Gastrocnemius medialis (tissue), 4 donors: ENCODE measurements at regions of chr9 and their contacts with region 1.

Region 1: GRCh38 chr9:7094052-7094451 is 336.3 kb downstream of the KDM4C start:
- DNase-seq: no peak
- ATAC-seq: no peak
- H3K4me3 ChIP-seq: no peak overlapping the region
- H3K27ac ChIP-seq: no peak overlapping the region
- H3K4me1 ChIP-seq: peaks cover 38 to 39% of the 10 kb centered on the region in 2 donors
- H3K27me3 ChIP-seq: no peaks in the 10 kb centered on the region
- CTCF ChIP-seq: peak in 4 of 5 experiments; percentile 39 to 59 (median 41)
- POLR2A ChIP-seq: no peak

Region 2: DNA sequence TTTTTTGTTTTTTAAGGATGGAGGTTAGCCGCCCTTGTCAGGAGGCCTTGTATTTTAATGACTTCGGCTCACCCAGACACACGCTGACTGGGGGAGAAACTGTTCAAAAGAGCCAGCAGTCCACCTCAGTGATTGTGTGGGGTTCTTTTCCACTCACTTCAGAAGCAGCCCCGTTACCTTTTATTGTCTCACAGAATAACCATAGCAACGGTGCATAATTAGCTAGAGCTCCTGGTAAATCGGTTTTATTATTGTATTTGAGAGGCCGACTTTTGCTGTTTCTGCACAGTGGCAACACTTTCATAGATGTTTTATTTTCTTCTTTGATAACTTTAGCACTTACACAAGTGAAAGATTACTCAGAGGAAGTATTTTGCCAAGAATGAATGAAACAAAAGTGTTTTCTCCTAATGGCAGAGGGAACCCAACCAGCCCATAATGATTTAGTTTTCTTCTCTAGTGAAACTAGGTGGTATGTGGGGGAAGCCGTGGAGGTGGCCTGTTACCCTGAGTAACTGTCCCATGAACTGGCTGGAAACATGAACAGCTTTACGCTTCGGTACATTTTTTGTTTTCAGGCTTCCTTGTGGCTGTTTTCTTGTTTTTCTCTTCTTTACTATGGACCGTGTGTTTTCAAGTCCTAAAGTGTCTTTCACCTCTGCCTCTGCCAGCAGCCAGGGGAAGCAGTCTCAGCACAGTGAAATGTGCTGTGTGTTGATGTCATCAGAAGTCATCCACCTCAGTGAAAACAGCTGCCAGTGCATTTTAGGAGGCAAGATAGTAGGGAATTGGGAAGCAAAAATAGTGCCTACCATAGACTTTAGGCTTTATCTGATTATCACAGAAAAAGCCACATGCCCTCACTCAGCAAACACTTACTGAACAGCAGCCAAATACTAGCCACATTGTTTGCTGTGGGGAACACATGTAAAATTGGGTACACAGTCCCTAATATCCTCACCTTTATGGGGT is 78.4 kb after region 1 on chr9:
- in situ Hi-C with region 1: no loop called
- intact Hi-C with region 1: loop called (anchors 10 kb)
- DNase-seq: no peak
- ATAC-seq: no peak
- H3K4me3 ChIP-seq: no peak overlapping the region
- H3K27ac ChIP-seq: peak overlapping the region in 2 of 4 donors; percentile 0 to 22
- H3K4me1 ChIP-seq: peaks cover 30 to 32% of the 10 kb centered on the region in 2 donors
- H3K27me3 ChIP-seq: no peaks in the 10 kb centered on the region
- CTCF ChIP-seq: no peak
- POLR2A ChIP-seq: no peak

Region 3: DNA sequence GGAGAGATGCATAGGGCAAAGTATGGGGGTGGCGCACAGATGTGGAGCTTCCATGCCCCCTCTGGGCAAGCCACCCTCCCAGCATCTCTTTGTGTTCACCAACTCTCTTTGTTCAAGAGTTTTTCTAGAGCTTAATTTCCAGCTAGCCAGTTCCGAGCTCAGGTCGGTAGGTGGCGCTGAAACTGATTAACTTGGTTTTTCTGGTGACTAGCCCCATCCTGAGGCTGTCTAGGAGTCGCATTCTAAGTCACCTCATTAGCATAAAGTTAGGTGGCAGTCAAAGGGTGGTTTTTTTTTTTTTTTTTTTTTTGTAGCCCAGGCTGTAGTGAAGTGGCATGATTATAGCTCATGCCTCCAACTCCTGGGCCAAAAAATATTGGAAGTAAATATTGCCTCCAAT is 140.1 kb after region 1 on chr9:
- in situ Hi-C with region 1: no loop called
- intact Hi-C with region 1: loop called (anchors 10 kb)
- DNase-seq: no peak
- ATAC-seq: no peak
- H3K4me3 ChIP-seq: no peak overlapping the region
- H3K27ac ChIP-seq: no peak overlapping the region
- H3K4me1 ChIP-seq: no peaks in the 10 kb centered on the region
- H3K27me3 ChIP-seq: no peaks in the 10 kb centered on the region
- CTCF ChIP-seq: peak in 1 of 5 experiments; percentile 41
- POLR2A ChIP-seq: no peak

Region 4: DNA sequence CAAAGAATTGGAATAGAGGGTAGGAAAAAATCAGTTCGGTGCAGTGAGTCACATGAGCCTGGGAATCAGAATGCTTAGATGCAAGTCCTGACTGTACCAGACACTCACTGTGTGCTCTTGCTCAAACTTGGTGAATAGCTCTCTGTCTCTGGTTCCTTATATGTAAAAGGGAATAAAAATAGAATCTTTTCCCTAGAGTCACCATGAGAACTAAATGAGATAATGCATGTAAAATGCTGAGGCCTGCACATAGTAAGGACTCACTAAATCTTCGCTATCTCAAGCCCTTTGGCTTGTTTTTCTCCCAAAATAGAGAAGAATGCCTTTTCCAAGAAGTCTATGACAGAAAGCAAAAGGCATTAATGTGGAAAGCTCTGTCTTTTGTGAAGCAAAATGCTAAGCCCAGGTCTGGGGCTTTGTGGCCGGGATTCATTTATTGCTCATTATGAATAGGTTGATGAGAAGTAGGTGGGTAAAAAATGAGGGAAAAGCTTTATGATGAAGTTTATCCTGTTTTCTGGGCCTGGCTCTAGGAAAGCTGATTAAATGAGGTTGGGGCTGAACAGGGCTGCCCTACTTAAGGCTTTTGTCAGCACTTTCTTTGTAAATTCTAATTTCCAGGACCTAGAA is 222.2 kb after region 1 on chr9:
- in situ Hi-C with region 1: no loop called
- intact Hi-C with region 1: loop called (anchors 10 kb)
- DNase-seq: no peak
- ATAC-seq: peak; percentile 89 to 92
- H3K4me3 ChIP-seq: peak overlapping the region in 1 of 4 donors; percentile 2
- H3K27ac ChIP-seq: peak overlapping the region; percentile 60 to 71 (median 66)
- H3K4me1 ChIP-seq: peaks cover 13 to 19% of the 10 kb centered on the region in 2 donors
- H3K27me3 ChIP-seq: no peaks in the 10 kb centered on the region
- CTCF ChIP-seq: no peak
- POLR2A ChIP-seq: no peak

Region 5: GRCh38 chr9:7676609-7677156 is 582.6 kb after region 1 on chr9:
- in situ Hi-C with region 1: no loop called
- intact Hi-C with region 1: no loop called
- DNase-seq: no peak
- ATAC-seq: no peak
- H3K4me3 ChIP-seq: no peak overlapping the region
- H3K27ac ChIP-seq: no peak overlapping the region
- H3K4me1 ChIP-seq: no peaks in the 10 kb centered on the region
- H3K27me3 ChIP-seq: no peaks in the 10 kb centered on the region
- CTCF ChIP-seq: no peak
- POLR2A ChIP-seq: no peak